ENCODE measurements at regions of chr14 and their contacts with region 1.

Region 1: DNA sequence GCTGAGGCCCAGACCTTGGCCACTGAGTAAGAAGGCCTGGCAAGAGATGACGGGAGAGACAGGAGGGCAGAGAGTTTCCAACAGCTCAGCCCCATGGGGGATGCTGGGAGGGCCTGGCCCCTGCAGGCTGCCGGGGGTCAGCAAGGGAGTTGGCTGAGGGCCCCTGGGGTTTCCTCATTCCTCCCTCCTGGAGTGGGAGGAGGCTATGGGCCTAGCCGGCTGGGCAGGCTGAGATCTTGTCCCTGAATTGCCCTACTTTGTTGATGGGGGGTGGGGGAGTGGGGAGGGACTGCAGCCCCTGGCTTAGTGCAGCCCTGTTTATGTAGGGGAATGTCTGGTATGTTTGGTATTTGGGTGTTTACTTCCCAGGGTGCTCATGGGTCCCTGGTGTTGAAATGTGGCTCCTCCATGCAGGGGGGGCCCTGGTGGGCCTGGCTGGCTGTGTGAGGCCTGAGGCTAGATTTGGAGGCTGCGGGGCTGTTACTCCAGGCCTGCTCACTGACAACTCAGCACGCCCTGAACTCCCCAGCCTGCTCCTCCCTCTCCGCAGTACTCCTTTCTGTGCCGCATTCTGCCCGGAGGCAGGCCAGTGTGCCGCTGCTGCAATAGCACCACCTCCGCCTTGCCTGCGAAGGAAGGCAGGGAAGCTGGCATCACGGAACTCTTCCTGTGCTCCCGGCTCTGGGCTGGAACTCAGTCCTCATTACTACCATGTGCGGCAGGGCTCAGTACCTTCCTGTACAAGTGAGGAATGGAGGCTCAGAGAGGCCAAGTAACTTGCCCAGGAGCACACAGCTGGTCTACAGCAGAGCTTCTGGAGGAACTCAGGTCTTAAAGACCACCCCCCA is 25.3 kb downstream of the JDP2 start:
- DNase-seq: peak; percentile 88 to 94
- H3K4me3 ChIP-seq: no peak overlapping the region
- H3K4me3 Mint-ChIP-seq: peak overlapping the region; percentile 43
- H3K27ac Mint-ChIP-seq: peak overlapping the region; percentile 82
- H3K4me1 ChIP-seq: peaks cover 77% of the 10 kb centered on the region
- H3K4me1 Mint-ChIP-seq: peaks cover 63% of the 10 kb centered on the region
- H3K27me3 ChIP-seq: no peaks in the 10 kb centered on the region
- H3K27me3 Mint-ChIP-seq: no peaks in the 10 kb centered on the region
- CTCF ChIP-seq: no peak

Region 2: GRCh38 chr14:75373616-75374015 is 79.5 kb before region 1 on chr14:
- CTCF ChIA-PET with region 1: no interaction called
- POLR2A ChIA-PET with region 1: no interaction called
- intact Hi-C with region 1: loop called (anchors 2 kb)
- DNase-seq: no peak
- H3K4me3 ChIP-seq: no peak overlapping the region
- H3K4me3 Mint-ChIP-seq: no peak overlapping the region
- H3K27ac Mint-ChIP-seq: no peak overlapping the region
- H3K4me1 ChIP-seq: peaks cover 32% of the 10 kb centered on the region
- H3K4me1 Mint-ChIP-seq: peaks cover 52% of the 10 kb centered on the region
- H3K27me3 ChIP-seq: no peaks in the 10 kb centered on the region
- H3K27me3 Mint-ChIP-seq: no peaks in the 10 kb centered on the region
- CTCF ChIP-seq: no peak

Region 3: DNA sequence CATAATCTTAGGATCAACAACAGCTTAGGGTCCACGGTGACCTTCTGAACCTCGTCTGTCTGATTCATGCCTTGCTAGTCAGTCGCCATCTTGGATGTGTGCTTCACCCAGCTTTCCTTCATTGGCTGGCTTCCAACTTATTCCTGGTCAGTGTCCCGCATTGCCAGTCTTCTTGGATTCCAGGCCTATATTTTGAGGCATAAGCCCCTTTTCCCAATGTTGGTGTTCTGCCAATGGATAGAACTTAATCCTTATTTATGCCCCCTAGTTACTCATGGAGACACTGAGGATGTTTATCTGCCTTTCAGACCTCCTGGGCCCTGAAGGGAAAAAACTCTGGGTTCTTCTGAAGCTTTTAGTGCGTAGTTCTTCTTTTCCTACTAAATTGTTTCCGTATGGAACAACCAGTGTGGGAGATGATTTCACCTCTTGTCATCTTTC is 19.5 kb before region 1 on chr14:
- CTCF ChIA-PET with region 1: interaction called, 3 read pairs
- POLR2A ChIA-PET with region 1: no interaction called
- intact Hi-C with region 1: loop called (anchors 2 kb)
- DNase-seq: no peak
- H3K4me3 ChIP-seq: no peak overlapping the region
- H3K4me3 Mint-ChIP-seq: no peak overlapping the region
- H3K27ac Mint-ChIP-seq: no peak overlapping the region
- H3K4me1 ChIP-seq: peaks cover 12% of the 10 kb centered on the region; the same call in 1 of the 2 replicates
- H3K4me1 Mint-ChIP-seq: peaks cover 8% of the 10 kb centered on the region
- H3K27me3 ChIP-seq: no peaks in the 10 kb centered on the region
- H3K27me3 Mint-ChIP-seq: no peaks in the 10 kb centered on the region
- CTCF ChIP-seq: no peak

Region 4: GRCh38 chr14:75476274-75476995 is 23.3 kb after region 1 on chr14:
- CTCF ChIA-PET with region 1: no interaction called
- POLR2A ChIA-PET with region 1: no interaction called
- intact Hi-C with region 1: loop called (anchors 1 kb)
- DNase-seq: peak; percentile 78 to 80
- H3K4me3 ChIP-seq: no peak overlapping the region
- H3K4me3 Mint-ChIP-seq: no peak overlapping the region
- H3K27ac Mint-ChIP-seq: peak overlapping the region; percentile 71
- H3K4me1 ChIP-seq: peaks cover 18% of the 10 kb centered on the region
- H3K4me1 Mint-ChIP-seq: peaks cover 34% of the 10 kb centered on the region
- H3K27me3 ChIP-seq: no peaks in the 10 kb centered on the region
- H3K27me3 Mint-ChIP-seq: no peaks in the 10 kb centered on the region
- CTCF ChIP-seq: peak in 1 of 2 experiments; percentile 9

Measured in Caco-2 (cell line).